Caco-2 (cell line): ENCODE measurements at regions of chr2 and their contacts with region 1.

Region 1: DNA sequence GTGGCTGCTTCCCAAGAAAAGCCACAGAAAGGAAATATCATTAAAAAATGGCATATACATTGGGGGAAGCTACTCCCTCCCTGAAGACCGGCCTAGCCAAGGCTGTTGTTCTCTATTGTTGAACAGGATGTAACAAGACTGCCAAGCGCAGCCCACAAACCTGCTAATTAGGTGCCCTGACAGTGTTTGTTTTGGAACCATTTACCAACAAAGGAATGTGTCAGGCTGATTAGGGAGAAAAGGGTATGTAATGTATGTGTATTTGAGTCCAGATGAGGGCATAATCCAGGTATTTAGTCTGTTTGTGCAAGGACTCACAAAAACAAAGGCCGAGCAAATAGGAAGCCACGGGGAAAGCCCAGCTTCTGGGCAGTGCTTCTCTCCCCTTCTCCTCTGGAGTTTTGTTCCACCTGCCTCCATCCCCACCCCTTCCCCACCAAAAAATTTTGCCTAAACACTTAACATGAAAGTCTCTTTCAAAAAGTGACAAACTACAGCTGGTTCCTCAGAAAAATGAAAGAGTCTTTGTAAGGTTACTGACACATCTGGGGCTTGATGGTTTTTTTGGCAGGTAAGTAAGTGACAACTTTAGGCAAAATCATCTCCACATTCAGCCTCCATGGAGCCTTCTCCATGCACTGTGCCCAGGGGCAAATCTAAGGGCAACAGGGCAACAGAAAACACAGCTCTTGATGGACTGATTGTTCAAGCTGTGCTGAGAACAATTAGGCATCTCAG is 78.3 kb upstream of the FZD5 start:
- DNase-seq: peak; percentile 72 to 86
- H3K4me3 ChIP-seq: no peak overlapping the region
- H3K4me3 Mint-ChIP-seq: no peak overlapping the region
- H3K27ac Mint-ChIP-seq: peak overlapping the region; percentile 49
- H3K4me1 ChIP-seq: peaks cover 52% of the 10 kb centered on the region
- H3K4me1 Mint-ChIP-seq: peaks cover 42% of the 10 kb centered on the region
- H3K27me3 ChIP-seq: no peaks in the 10 kb centered on the region
- H3K27me3 Mint-ChIP-seq: no peaks in the 10 kb centered on the region
- CTCF ChIP-seq: no peak

Region 2: GRCh38 chr2:207625018-207625907 is 222.7 kb before region 1 on chr2 and contains the start of gene METTL21A:
- CTCF ChIA-PET with region 1: no interaction called
- POLR2A ChIA-PET with region 1: no interaction called
- intact Hi-C with region 1: no loop called
- DNase-seq: peak; percentile 95 to 96
- H3K4me3 ChIP-seq: peak within 1 kb of the TSS; percentile 93
- H3K4me3 Mint-ChIP-seq: peak within 1 kb of the TSS; percentile 93
- H3K27ac Mint-ChIP-seq: peak within 1 kb of the TSS; percentile 92
- H3K4me1 ChIP-seq: no peaks in the 10 kb centered on the region; the same call in 1 of the 2 replicates
- H3K4me1 Mint-ChIP-seq: peaks cover 10% of the 10 kb centered on the region
- H3K27me3 ChIP-seq: no peaks in the 10 kb centered on the region
- H3K27me3 Mint-ChIP-seq: no peaks in the 10 kb centered on the region
- CTCF ChIP-seq: peak; percentile 33 to 61
- total RNA-seq, gene METTL21A: 31.0 and 34.0 TPM in 2 replicates

Region 3: GRCh38 chr2:207746131-207746530 is 101.8 kb before region 1 on chr2:
- CTCF ChIA-PET with region 1: interaction called, 3 read pairs
- POLR2A ChIA-PET with region 1: interaction called, 5 read pairs
- intact Hi-C with region 1: loop called (anchors 1 kb)
- DNase-seq: peak; percentile 73 to 78
- H3K4me3 ChIP-seq: no peak overlapping the region
- H3K4me3 Mint-ChIP-seq: no peak overlapping the region
- H3K27ac Mint-ChIP-seq: peak overlapping the region; percentile 12
- H3K4me1 ChIP-seq: peaks cover 52% of the 10 kb centered on the region
- H3K4me1 Mint-ChIP-seq: peaks cover 23% of the 10 kb centered on the region
- H3K27me3 ChIP-seq: no peaks in the 10 kb centered on the region
- H3K27me3 Mint-ChIP-seq: no peaks in the 10 kb centered on the region
- CTCF ChIP-seq: peak; percentile 94 to 95

Region 4: GRCh38 chr2:207801259-207801658 is 46.7 kb before region 1 on chr2:
- CTCF ChIA-PET with region 1: no interaction called
- POLR2A ChIA-PET with region 1: interaction called, 3 read pairs
- intact Hi-C with region 1: loop called (anchors 1 kb)
- DNase-seq: peak; percentile 57 to 67
- H3K4me3 ChIP-seq: no peak overlapping the region
- H3K4me3 Mint-ChIP-seq: peak overlapping the region; percentile 25
- H3K27ac Mint-ChIP-seq: peak overlapping the region; percentile 49
- H3K4me1 ChIP-seq: peaks cover 66% of the 10 kb centered on the region
- H3K4me1 Mint-ChIP-seq: peaks cover 33% of the 10 kb centered on the region
- H3K27me3 ChIP-seq: no peaks in the 10 kb centered on the region
- H3K27me3 Mint-ChIP-seq: no peaks in the 10 kb centered on the region
- CTCF ChIP-seq: peak in 1 of 2 experiments; percentile 3

Region 5: DNA sequence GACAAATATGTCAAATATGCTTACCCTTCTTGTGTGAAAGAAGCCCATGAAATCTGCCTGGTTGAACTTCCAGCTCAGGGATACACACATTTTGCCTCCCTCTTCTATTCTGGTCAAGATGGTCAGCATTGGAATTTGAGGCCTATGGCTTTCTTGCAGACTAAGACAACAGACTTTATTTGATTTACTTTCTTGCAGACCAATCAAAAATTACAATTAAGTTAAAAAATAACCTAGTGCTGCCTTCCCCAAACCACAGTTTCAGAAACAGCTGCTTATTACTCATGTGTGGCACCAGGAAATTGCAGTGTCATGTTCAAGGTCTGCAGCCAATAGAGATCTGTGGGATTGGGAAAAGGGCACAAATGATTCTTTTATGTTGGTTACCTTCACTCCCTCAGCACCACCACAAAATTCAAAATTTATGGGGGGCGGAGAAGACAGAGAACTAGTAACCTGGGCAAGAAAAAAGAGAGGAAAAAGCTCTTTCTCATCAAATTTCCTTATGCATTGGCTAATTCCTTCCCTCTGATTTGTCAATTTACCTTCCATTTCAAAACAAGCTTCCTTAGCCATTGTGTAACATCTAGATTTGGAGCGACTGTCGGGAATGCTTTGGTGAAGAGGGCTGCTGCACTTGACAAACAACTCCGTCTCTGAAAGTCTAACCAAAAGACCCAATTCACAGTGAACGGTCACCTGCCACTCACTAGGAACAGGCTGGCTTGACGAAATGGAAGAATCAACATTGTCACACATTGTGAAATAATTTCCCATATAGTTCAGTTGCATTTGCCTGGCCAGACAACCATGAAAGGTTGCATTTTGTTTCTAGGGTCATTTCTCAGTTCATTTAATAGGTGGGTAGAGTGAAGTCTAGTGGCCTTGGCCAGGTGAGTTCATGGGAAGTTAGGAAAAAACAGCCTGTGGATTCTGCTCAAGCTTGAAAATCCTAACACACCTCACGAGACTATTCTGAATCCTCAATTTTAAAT is 22.1 kb after region 1 on chr2:
- CTCF ChIA-PET with region 1: no interaction called
- POLR2A ChIA-PET with region 1: no interaction called
- intact Hi-C with region 1: loop called (anchors 1 kb)
- DNase-seq: peak in 1 of 2 experiments; percentile 57
- H3K4me3 ChIP-seq: no peak overlapping the region
- H3K4me3 Mint-ChIP-seq: no peak overlapping the region
- H3K27ac Mint-ChIP-seq: no peak overlapping the region
- H3K4me1 ChIP-seq: peaks cover 27% of the 10 kb centered on the region
- H3K4me1 Mint-ChIP-seq: peaks cover 6% of the 10 kb centered on the region
- H3K27me3 ChIP-seq: no peaks in the 10 kb centered on the region
- H3K27me3 Mint-ChIP-seq: no peaks in the 10 kb centered on the region
- CTCF ChIP-seq: no peak

Region 6: GRCh38 chr2:207930747-207931146 is 82.8 kb after region 1 on chr2:
- CTCF ChIA-PET with region 1: no interaction called
- POLR2A ChIA-PET with region 1: no interaction called
- intact Hi-C with region 1: loop called (anchors 2 kb)
- DNase-seq: peak; percentile 86 to 89
- H3K4me3 ChIP-seq: peak overlapping the region; percentile 19
- H3K4me3 Mint-ChIP-seq: peak overlapping the region; percentile 79
- H3K27ac Mint-ChIP-seq: peak overlapping the region; percentile 87
- H3K4me1 ChIP-seq: peaks cover 77% of the 10 kb centered on the region
- H3K4me1 Mint-ChIP-seq: peaks cover 40% of the 10 kb centered on the region
- H3K27me3 ChIP-seq: no peaks in the 10 kb centered on the region
- H3K27me3 Mint-ChIP-seq: no peaks in the 10 kb centered on the region
- CTCF ChIP-seq: peak in 1 of 2 experiments; percentile 23

Region 7: DNA sequence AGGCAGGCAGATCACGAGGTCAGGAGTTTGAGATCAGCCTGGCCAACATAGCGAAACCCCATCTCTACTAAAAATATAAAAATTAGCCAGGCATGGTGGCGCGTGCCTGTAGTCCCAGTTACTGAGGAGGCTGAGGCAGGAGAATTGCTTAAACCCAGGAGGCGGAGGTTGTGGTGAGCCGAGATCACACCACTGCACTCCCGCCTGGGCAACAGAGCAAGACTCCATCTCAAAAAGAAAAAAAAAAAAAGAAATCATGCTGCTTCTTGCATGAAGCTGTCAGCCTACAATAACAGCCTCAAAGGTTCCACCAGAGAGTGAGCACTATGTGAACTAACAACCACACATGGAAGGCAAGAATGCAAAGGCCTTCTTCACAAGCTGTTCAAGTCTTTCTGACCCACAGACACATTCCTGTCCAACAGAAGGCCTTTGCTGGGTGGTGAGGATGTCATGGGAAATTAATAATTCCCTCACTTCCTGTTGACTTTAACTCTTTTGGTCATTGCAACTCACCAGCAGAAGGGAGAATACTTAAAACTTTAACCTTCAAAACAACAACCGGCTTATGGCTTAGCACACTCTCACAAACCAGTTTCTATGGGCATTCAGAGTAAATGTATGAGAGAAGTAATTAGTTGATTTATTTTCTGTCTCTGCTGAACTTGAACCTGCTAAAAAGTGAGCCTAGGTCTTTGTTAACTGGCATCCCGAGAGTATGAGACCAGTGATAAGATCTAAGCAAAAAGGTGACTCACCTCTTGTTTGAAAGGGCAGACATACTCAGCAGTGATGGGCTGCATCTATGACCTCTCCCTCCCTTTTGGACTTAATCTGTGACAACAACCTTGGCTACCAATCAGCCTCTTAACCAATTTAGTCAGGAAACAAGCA is 165.6 kb after region 1 on chr2:
- CTCF ChIA-PET with region 1: no interaction called
- POLR2A ChIA-PET with region 1: no interaction called
- intact Hi-C with region 1: loop called (anchors 1 kb)
- DNase-seq: peak; percentile 32 to 53
- H3K4me3 ChIP-seq: no peak overlapping the region
- H3K4me3 Mint-ChIP-seq: no peak overlapping the region
- H3K27ac Mint-ChIP-seq: no peak overlapping the region
- H3K4me1 ChIP-seq: peaks cover 43% of the 10 kb centered on the region
- H3K4me1 Mint-ChIP-seq: peaks cover 10% of the 10 kb centered on the region
- H3K27me3 ChIP-seq: no peaks in the 10 kb centered on the region
- H3K27me3 Mint-ChIP-seq: no peaks in the 10 kb centered on the region
- CTCF ChIP-seq: no peak